Breast epithelium (tissue), 4 donors: ENCODE measurements at regions of chr10 and their contacts with region 1.

Region 1: DNA sequence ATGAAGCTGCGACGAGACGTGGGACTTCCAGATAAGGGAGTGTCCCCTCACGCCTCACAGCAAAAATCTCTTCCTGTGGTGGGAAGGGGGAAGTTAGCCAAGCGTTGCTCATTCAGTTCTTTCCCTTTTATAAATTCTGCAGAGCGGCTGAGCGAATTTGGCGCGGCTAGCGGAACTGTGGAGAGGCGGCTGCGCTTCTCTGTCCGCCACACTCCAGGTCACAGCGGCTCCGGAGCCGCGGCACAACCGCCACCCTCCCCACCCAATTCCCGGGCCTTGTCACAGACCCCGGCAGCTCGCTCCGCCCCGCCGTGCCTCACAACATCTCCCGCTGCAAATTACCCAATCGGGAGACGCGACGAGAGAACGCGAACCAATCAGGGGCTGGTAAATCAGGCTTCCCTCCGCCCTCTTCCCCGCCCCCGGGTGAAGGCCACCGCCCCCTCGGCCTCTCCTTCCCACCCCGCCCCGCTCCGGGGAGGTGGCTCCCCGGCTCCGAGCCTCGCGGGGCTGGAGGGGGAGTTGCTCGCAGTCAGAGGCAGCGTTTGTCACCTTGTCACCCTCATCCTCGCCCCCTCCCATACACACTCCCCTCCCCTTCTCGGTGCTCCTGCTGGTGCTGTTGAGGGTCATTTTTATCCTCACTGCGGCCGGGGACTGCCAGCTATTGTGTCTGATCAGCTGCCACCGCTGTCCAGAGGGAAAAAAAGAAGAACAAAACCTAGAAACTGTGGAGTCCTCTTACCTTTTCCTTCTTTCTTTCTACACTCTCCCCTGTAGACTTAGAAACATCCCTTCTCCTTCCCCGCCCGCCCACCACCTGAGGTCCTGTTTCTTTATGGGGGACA is 918 bp upstream of the ARHGAP21 start:
- DNase-seq: peak; percentile 97
- H3K4me3 ChIP-seq: peak overlapping the region; percentile 69 to 82 (median 70)
- H3K27ac ChIP-seq: peak overlapping the region; percentile 95 to 98
- H3K4me1 ChIP-seq: no peaks in the 10 kb centered on the region
- H3K27me3 ChIP-seq: no peaks in the 10 kb centered on the region
- CTCF ChIP-seq: peak in 1 of 3 donors; percentile 21
- POLR2A ChIP-seq: peak; percentile 77

Region 2: GRCh38 chr10:24465891-24466818 is 258.4 kb before region 1 on chr10:
- intact Hi-C with region 1: loop called (anchors 5 kb)
- DNase-seq: peak in 1 of 2 donors; percentile 84
- H3K4me3 ChIP-seq: peak overlapping the region in 2 of 3 donors; percentile 49 to 63
- H3K27ac ChIP-seq: peak overlapping the region; percentile 91 to 97
- H3K4me1 ChIP-seq: peaks cover 10 to 20% of the 10 kb centered on the region in 2 donors
- H3K27me3 ChIP-seq: no peaks in the 10 kb centered on the region
- CTCF ChIP-seq: no peak
- POLR2A ChIP-seq: peak; percentile 66

Region 3: GRCh38 chr10:25016376-25017154 is 292.0 kb after region 1 on chr10 and contains the start of gene THNSL1:
- intact Hi-C with region 1: loop called (anchors 5 kb)
- DNase-seq: peak; percentile 97 to 98
- H3K4me3 ChIP-seq: peak within 1 kb of the TSS; percentile 55 to 76 (median 72)
- H3K27ac ChIP-seq: peak within 1 kb of the TSS; percentile 94 to 95
- H3K4me1 ChIP-seq: peaks cover 0 to 6% of the 10 kb centered on the region in 2 donors
- H3K27me3 ChIP-seq: no peaks in the 10 kb centered on the region
- CTCF ChIP-seq: no peak
- POLR2A ChIP-seq: peak; percentile 71
- total RNA-seq, gene THNSL1: 1.6 to 4.2 (median 1.6) TPM